Activated CD4-positive, alpha-beta T cell treated with anti-CD3 and anti-CD28 coated beads for 36 hours (primary cell): ENCODE measurements at regions of chr2 and their contacts with region 1.

Region 1: DNA sequence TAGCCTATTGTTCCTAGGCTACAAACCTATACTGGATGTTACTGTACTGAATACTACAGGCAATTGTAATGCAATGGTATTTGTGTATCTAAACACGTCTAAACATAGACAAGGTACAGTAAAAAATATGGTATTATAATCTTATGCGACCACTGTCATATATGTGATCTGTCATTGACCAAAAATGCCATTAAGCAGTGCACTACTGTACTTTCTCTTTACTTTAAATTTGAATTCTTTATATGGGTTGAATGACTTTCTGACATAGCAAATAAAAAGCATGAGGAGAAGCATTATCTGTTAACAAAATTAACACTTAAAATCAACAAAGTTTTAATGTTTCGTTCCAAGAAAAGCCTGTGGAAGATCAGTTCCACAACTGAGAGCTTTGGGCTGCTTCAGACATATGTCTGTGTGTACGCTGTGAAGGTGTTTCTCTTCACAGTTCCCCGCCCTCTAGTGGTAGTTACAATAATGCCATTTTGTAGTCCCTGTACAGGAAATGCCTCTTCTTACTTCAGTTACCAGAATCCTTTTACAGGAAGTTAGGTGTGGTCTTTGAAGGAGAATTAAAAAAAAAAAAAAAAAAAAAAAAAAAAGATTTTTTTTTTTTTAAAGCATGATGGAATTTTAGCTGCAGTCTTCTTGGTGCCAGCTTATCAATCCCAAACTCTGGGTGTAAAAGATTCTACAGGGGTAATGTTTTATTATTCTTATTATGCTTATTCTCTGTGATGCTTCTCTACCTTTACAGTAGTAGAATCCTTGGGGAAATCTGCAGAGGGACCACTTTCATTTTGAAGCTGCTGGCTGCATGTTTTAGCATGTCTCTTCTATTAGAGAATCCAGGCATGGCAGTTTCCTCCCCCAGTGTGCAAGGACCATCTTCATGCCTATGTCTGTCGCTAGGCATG is 54.5 kb downstream of the SCN2A start:
- DNase-seq: peak; percentile 36
- ATAC-seq: peak; percentile 100
- H3K4me3 Mint-ChIP-seq: no peak overlapping the region
- H3K27ac Mint-ChIP-seq: no peak overlapping the region
- H3K4me1 Mint-ChIP-seq: peaks cover 2% of the 10 kb centered on the region
- H3K27me3 Mint-ChIP-seq: peaks cover 6% of the 10 kb centered on the region

Region 2: DNA sequence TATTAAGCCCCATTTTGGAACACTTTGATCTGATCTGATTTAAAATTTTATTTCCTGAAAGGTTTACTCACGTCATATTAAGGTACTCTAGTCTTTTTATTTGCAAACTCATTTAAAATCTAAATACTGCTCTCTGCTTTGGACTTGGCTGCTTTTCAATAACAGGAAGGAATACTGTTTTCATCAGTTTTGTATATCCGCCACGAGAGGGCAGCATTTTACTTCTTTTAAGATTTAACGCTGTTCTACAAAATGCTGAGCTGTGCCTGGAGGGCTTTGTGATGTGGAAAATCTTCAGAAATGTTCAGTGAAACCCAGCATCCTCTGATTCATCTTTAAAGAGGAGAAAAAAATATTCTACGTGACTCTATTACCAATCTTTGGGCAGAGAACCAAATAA is 300.9 kb before region 1 on chr2:
- CTCF ChIA-PET with region 1: interaction called, 3 read pairs
- POLR2A ChIA-PET with region 1: no interaction called
- intact Hi-C with region 1: loop called in 1 of 2 experiments (anchors 1 kb)
- DNase-seq: peak; percentile 49
- ATAC-seq: peak; percentile 58
- H3K4me3 Mint-ChIP-seq: no peak overlapping the region
- H3K27ac Mint-ChIP-seq: no peak overlapping the region
- H3K4me1 Mint-ChIP-seq: peaks cover 14% of the 10 kb centered on the region
- H3K27me3 Mint-ChIP-seq: no peaks in the 10 kb centered on the region

Region 3: GRCh38 chr2:165239230-165239629 is 54.5 kb before region 1 on chr2 and contains the start of gene SCN2A:
- CTCF ChIA-PET with region 1: interaction called, 9 read pairs
- POLR2A ChIA-PET with region 1: no interaction called
- intact Hi-C with region 1: loop called (anchors 1 kb)
- DNase-seq: no peak
- ATAC-seq: no peak
- H3K4me3 Mint-ChIP-seq: no peak within 1 kb of the TSS
- H3K27ac Mint-ChIP-seq: no peak within 1 kb of the TSS
- H3K4me1 Mint-ChIP-seq: no peaks in the 10 kb centered on the region
- H3K27me3 Mint-ChIP-seq: no peaks in the 10 kb centered on the region
- total RNA-seq, gene SCN2A: 0.07 to 0.14 TPM

Region 4: GRCh38 chr2:165277860-165278656 is 15.6 kb before region 1 on chr2:
- CTCF ChIA-PET with region 1: no interaction called
- POLR2A ChIA-PET with region 1: no interaction called
- intact Hi-C with region 1: loop called in 1 of 2 experiments (anchors 2 kb)
- DNase-seq: peak; percentile 11
- ATAC-seq: peak; percentile 58
- H3K4me3 Mint-ChIP-seq: no peak overlapping the region
- H3K27ac Mint-ChIP-seq: peak overlapping the region; percentile 48
- H3K4me1 Mint-ChIP-seq: peaks cover 13% of the 10 kb centered on the region
- H3K27me3 Mint-ChIP-seq: peaks cover 2% of the 10 kb centered on the region